HEK293 (cell line): ENCODE measurements at regions of chr6 and their contacts with region 1.

Region 1: DNA sequence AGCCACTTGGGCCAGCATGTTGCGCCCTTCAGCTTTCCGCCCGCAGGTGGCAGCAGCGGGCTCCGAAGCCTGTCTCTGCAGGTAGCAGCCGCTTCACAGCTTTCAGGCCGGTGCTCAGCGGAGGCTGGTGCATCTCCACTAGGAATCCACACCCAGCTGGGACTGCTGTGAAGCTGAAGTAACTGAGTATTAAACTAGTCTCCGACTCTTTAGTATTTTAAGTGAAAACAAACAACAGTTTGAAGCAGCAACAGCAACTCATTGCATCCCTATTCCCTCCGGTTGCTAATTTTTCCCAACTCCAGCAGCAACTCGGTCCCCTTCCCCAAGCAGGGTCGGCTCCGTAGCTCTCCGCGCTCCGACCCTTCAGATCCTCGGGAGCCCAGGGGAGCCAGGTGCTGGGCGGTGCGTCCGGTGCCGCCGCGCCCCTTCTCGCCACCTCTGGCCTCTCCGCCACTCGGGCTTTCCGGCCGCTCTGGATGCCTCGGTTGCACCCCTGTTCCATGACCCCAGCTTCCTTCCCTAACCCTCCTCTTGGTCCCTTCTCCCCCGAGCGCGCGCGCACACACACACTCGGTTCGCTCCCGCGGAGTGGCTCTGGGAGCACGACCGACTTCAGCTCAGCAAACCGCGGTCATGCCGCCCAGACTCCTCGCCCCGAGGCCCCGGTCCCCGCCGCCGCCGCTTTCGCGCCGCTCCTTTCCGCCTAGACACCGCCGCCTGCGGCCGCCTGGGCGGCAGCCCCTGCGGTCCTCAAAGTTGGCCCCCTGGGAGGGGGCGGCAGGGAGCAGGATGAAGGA is 768 bp upstream of the NKAIN2 start:
- H3K4me3 ChIP-seq: peak overlapping the region; percentile 69
- H3K27ac ChIP-seq: peak overlapping the region; percentile 97
- H3K4me1 ChIP-seq: peaks cover 5% of the 10 kb centered on the region; the same call in 1 of the 2 replicates
- CTCF ChIP-seq: peak; percentile 87

Region 2: DNA sequence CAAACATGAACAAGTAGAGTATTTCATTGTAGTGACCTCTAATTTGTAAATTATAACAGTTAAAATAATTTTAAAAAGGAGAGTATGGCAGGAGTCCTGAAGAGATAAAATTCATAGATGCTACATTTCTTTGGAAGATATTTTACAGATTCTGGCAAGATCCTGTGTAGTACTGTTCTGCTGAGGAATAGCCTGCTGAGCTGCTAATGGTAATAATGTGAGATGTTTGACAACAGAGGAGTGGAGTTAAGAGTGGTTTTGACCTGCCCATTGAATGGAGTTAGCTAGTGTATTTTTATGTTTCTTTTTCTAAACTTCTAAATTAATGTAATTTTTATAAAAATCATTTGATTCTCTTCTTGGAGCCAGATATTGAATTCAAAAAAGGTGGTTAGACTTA is 795.0 kb before region 1 on chr6:
- CTCF ChIA-PET with region 1: no interaction called
- POLR2A ChIA-PET with region 1: no interaction called
- H3K4me3 ChIP-seq: no peak overlapping the region
- H3K27ac ChIP-seq: no peak overlapping the region
- H3K4me1 ChIP-seq: 0 out of 2 replicates have a peak, but pooled peaks cover 2% of the 10 kb centered on the region
- CTCF ChIP-seq: no peak

Region 3: DNA sequence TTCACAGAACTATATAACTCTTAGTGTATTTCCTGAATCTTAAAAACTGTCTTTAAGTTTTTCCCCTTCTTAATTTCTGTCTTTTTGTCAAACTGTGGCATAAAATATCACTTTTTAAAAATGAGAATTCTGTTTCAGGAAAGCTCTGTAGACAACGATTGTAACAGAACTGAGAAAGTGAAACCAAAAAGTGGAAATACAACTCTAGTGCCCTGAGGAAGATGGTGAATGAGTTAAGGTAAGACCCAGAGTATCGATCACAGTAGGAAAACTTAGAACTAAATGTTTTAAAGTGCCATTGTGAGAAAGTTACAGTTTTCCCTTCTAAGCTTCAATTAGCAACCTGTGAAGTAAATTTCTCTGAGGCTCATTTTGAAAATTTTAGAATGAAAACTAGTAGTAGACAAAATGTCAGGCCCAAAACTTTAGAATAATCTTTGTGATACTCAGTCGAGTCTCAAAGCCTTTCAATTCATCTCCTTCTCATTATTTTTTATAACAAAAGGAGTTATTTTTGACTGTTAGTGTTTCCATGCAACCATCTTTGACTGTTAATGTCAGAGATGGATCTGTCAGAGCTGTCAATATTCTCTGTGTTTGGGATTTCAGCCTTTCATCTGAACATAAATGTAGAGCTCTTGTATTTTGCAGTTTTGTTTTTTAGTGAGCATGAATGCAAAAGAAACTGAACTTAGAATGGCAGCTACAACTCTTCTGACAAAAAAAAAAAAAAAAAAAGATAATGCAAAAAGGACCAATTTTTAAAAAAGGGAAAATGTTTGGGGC is 147.2 kb before region 1 on chr6:
- CTCF ChIA-PET with region 1: no interaction called
- POLR2A ChIA-PET with region 1: no interaction called
- H3K4me3 ChIP-seq: no peak overlapping the region
- H3K27ac ChIP-seq: no peak overlapping the region
- H3K4me1 ChIP-seq: no peaks in the 10 kb centered on the region
- CTCF ChIP-seq: no peak

Region 4: DNA sequence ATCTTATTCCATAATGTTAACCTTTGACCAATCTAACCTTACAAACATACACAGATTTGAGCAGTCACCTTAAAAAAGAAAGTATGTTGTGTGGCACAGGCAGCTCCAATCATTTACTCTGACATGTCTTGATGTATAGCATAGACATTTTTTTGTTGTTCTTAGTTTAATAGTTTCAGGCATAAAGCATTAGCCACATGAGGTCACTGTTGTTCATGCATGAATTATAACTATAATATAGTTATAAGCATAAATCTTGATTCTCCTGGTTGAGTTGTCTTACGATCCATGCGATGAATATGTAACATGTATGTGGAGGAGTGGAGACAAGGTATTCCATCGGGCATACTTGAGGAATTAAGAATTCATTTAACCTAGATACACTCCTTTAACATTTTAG is 25.3 kb before region 1 on chr6:
- CTCF ChIA-PET with region 1: interaction called, 10 read pairs
- POLR2A ChIA-PET with region 1: interaction called, 4 read pairs
- H3K4me3 ChIP-seq: no peak overlapping the region
- H3K27ac ChIP-seq: no peak overlapping the region
- H3K4me1 ChIP-seq: no peaks in the 10 kb centered on the region
- CTCF ChIP-seq: peak; percentile 43; the same call in 1 of the 2 replicates

Region 5: DNA sequence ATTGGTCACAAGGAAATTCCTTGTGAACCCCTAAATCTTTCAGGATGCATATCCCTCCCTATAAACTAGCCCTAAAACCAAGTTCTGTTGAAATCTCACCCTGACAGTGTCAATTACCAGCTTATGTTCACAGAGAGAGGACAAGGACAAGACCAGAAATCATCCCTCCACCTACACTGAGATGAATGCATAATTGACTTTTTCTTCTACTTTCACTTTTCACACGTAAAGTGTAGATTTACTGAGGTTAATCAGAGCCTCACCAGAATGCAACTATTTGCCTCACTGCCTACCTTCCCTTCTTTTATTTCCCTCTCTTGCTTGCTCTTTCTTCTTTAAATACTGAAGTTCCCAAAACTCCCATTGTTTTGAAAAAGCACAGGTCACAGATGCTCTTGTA is 14.6 kb before region 1 on chr6:
- CTCF ChIA-PET with region 1: interaction called, 12 read pairs
- POLR2A ChIA-PET with region 1: interaction called, 3 read pairs
- H3K4me3 ChIP-seq: no peak overlapping the region
- H3K27ac ChIP-seq: no peak overlapping the region
- H3K4me1 ChIP-seq: no peaks in the 10 kb centered on the region
- CTCF ChIP-seq: no peak

Region 6: DNA sequence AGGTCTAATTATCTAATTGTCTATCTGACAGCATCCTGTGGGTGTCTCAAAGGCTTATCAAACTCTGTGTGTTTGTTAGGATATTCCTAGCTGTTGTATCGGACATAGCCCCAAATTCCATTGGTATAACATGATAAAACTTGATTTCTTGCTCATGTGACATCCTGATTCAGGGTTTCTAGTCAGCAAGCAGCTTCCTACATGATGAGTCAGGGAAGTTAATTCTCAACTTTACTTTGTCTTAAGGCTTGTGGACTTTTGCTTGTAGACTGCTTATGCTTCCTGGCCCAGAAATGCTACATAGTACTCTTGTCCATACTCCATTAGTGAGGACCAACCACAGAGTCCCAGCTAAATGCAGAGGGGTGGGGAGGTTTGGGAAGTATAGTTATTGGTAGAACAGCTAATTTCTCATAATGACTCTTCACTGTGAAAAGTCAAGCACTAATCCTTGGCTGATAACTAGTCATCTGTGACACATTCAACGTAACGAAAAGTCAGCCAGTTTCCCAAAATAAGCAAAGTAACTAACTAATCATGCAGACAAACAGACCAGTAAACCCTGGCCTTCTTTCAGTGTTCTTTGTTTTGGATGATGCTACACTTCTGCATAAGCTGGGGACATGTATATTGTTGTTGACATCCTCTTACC is 26.5 kb after region 1 on chr6:
- CTCF ChIA-PET with region 1: interaction called, 12 read pairs
- POLR2A ChIA-PET with region 1: no interaction called
- H3K4me3 ChIP-seq: no peak overlapping the region
- H3K27ac ChIP-seq: no peak overlapping the region
- H3K4me1 ChIP-seq: peaks cover 15% of the 10 kb centered on the region; the same call in 1 of the 2 replicates
- CTCF ChIP-seq: no peak

Region 7: GRCh38 chr6:123965894-123966293 is 163.0 kb after region 1 on chr6:
- CTCF ChIA-PET with region 1: interaction called, 32 read pairs
- POLR2A ChIA-PET with region 1: interaction called, 3 read pairs
- H3K4me3 ChIP-seq: no peak overlapping the region
- H3K27ac ChIP-seq: no peak overlapping the region
- H3K4me1 ChIP-seq: peaks cover 12% of the 10 kb centered on the region
- CTCF ChIP-seq: peak; percentile 68

Region 8: DNA sequence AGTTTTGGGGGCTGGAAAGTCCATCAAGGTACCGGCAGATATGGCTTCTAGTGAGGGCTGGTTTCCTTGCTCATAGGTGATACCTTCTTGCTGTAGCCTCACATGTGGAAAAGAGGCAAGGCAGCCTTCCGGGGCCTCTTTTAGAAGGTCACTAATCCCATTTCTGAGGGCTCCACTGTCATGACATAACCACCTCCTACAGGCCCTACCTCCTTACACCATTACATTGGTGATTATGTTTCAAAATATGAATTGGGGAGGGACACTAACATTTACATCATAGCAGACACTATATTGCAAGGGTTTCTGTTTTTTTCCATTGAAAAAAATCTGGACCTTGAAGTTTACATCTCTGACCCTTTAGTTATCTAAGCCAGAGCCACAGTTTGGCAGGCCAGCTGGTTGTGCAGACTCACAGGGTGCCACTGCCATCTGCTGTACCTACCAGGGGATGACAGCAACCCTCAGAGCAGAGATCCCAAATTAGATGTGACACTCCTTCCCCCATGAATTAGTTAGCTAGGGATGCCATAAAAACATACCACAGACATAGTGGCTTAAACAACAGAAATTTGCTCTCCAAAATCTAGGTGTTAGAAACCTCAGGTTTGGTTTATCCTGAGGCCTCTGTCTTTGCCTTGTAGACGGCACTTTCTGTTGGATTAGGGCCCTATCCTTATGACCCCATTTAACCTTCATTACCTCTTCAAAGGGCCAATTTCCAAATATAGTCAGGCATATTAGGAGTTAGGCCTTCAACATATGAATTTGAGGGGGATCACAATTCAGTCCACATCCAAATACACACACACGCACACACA is 993.0 kb after region 1 on chr6:
- CTCF ChIA-PET with region 1: interaction called, 18 read pairs
- POLR2A ChIA-PET with region 1: no interaction called
- H3K4me3 ChIP-seq: no peak overlapping the region
- H3K27ac ChIP-seq: no peak overlapping the region
- H3K4me1 ChIP-seq: peaks cover 6% of the 10 kb centered on the region; the same call in 1 of the 2 replicates
- CTCF ChIP-seq: peak; percentile 85

Region 9: GRCh38 chr6:124854338-124854922 is 1051.5 kb after region 1 on chr6:
- CTCF ChIA-PET with region 1: interaction called, 11 read pairs
- POLR2A ChIA-PET with region 1: no interaction called
- H3K4me3 ChIP-seq: no peak overlapping the region
- H3K27ac ChIP-seq: no peak overlapping the region
- H3K4me1 ChIP-seq: no peaks in the 10 kb centered on the region
- CTCF ChIP-seq: no peak